RWPE1 (cell line): ENCODE measurements at regions of chr3 and their contacts with region 1.

Region 1: DNA sequence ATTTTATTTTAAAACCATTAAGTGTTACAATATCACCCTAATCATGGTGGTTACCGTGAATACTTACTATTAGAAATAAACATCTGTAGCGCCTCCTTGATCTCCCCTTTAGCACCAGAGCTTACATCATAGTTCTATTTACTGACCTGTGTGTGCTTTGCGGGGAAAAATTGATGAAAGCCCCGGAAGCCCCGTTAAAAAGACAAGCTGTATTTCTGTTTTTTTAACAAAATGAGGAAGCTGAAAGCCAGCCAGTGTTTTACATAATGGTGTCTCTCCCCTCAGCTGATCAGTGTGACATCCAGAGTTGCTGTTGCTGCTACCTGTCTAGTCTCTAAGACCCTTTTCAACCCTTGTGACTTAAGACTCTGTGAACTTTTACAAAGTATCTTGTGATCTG is 100.8 kb downstream of the OPA1 start:
- DNase-seq: no peak
- H3K27ac ChIP-seq: no peak overlapping the region
- CTCF ChIP-seq: no peak

Region 2: GRCh38 chr3:195063581-195064193 is 1369.9 kb after region 1 on chr3:
- CTCF ChIA-PET with region 1: no interaction called
- POLR2A ChIA-PET with region 1: interaction called, 11 read pairs
- DNase-seq: no peak
- H3K27ac ChIP-seq: no peak overlapping the region
- CTCF ChIP-seq: no peak